GM13976 (cell line): ENCODE measurements at regions of chr14 and their contacts with region 1.

Region 1: DNA sequence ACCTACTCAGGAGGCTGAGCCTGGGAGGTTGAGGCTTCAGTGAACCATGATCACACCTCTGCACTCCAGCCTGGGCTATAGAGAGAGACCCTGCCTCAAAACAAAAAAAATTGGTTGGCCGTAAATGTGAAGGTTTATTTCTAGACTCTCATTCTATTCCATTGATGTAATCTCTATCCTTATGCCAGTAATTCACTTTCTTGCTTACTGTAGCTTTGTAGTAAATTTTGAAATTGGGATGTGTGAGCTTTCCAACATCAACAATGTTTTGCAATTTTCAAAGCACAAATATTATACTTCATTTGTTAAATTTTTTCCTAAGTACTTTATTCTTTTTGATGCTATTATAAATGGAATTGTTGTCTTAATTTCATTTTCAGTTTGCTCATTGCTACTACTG is 24.6 kb downstream of the LIN52 start:
- DNase-seq: no peak
- CTCF ChIP-seq: no peak

Region 2: GRCh38 chr14:74249433-74250375 is 140.3 kb after region 1 on chr14:
- in situ Hi-C with region 1: loop called (anchors 5 kb)
- DNase-seq: no peak
- CTCF ChIP-seq: no peak